ENCODE measurements at regions of chr2 and their contacts with region 1.

Region 1: DNA sequence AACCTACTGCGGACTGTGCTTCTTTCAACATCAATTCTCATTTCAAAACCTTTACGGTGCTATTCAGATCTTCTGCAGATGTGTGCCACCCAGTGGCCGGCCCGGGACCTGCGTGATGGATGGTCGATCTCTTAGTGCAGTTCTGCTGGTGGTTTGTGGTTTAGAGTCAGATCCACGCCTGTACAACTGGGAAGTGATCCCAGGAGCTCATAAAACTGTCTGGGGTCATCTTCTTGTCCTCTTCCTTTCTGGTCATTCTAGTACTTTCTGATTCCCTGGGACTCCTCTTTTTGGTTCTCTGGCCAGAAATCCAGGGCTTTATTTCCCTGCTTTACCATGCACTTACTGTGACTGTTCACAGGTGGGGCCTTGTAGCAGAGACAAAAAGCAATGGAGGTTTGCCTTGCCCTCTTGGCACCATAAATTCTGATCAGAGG is 15.8 kb upstream of the SELENOI start:
- DNase-seq: peak; percentile 67
- H3K4me3 ChIP-seq: no peak overlapping the region
- CTCF ChIP-seq: peak; percentile 87

Region 2: DNA sequence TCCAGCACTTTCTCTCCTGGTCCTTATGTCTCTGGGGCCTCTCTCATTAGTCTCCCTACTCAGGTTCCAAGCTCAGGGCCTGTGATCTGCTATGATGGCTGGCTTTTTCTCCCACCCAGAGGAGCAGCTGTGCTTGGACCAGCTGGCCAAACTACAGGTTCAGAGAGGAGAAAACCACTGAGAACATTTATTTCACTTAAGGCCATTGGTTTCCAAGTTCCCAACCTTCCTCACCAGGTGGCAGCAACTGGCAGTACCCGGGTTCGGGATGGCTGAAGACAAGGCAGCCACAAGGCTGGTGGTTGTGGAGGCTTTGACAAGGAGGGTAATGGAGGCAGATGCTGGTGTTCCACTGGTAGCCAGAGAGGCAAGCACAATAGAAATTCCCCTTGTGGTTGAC is 14.1 kb before region 1 on chr2:
- CTCF ChIA-PET with region 1: interaction called, 42 read pairs
- POLR2A ChIA-PET with region 1: no interaction called
- DNase-seq: no peak
- H3K4me3 ChIP-seq: no peak overlapping the region
- CTCF ChIP-seq: peak; percentile 10

Region 3: GRCh38 chr2:26345545-26346453 is 15.7 kb after region 1 on chr2 and contains the start of gene SELENOI:
- CTCF ChIA-PET with region 1: interaction called, 15 read pairs
- POLR2A ChIA-PET with region 1: no interaction called
- DNase-seq: peak; percentile 90
- H3K4me3 ChIP-seq: peak within 1 kb of the TSS; percentile 96
- CTCF ChIP-seq: no peak

Region 4: DNA sequence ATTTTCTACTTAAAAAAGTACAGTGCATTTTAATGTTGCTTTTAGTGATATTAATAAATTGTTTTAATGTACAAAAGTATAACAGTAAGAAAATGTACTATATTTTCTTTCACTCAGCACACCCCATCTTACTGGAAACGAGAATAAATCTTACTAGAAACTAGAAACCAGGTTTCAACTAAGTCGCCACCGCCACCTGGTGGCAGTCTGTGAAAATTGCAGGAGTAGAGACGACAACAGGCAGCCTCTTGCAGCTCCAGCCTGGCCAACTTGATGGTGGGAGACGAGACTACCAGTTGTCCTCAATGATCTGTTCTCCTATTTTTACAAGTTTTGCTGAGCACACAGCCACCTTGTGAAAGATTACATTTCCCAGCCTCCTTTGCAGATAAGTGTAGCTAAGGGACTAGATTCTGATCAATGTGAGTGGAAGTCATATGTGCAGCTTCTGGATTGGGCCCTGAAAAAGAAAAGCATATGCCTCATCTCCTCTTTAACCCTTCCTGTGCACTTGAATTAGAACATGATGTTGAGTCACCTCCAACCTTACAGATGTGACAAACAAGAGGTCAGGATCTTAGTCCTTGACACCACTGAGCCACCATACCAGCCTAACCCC is 139.1 kb after region 1 on chr2:
- CTCF ChIA-PET with region 1: interaction called, 12 read pairs
- POLR2A ChIA-PET with region 1: no interaction called
- DNase-seq: no peak
- H3K4me3 ChIP-seq: no peak overlapping the region
- CTCF ChIP-seq: peak; percentile 46

Measured in AG04449 (cell line).